ENCODE measurements at regions of chr1 and their contacts with region 1.

Region 1: GRCh38 chr1:157984469-157984868 is 9.0 kb upstream of the KIRREL1 start:
- H3K4me3 ChIP-seq: no peak overlapping the region
- H3K27ac ChIP-seq: no peak overlapping the region
- H3K4me1 ChIP-seq: no peaks in the 10 kb centered on the region
- CTCF ChIP-seq: no peak

Region 2: DNA sequence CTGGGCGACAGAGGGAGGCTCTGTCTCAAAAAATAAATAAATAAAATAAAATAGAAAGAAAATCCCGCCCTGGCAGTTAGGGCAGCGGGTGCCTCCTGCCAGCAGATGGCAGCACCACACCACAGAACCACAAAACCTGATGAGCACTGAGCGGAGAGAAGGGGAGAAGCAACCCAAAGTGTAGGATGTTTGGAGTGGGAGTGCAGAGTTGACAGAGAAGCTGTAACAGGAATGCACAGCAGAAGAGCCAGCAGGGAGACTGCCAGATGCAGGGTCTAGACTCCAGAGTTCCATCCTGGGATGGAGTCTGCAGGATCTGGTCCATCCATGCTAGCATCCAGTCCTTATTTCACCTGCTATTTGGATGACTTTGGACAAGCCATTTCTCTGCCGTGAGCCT is 20.8 kb before region 1 on chr1:
- CTCF ChIA-PET with region 1: interaction called, 71 read pairs
- POLR2A ChIA-PET with region 1: no interaction called
- H3K4me3 ChIP-seq: no peak overlapping the region
- H3K27ac ChIP-seq: no peak overlapping the region
- H3K4me1 ChIP-seq: no peaks in the 10 kb centered on the region
- CTCF ChIP-seq: peak; percentile 84

Region 3: GRCh38 chr1:157969697-157970485 is 14.6 kb before region 1 on chr1:
- CTCF ChIA-PET with region 1: interaction called, 71 read pairs
- POLR2A ChIA-PET with region 1: no interaction called
- H3K4me3 ChIP-seq: no peak overlapping the region
- H3K27ac ChIP-seq: no peak overlapping the region
- H3K4me1 ChIP-seq: no peaks in the 10 kb centered on the region
- CTCF ChIP-seq: peak; percentile 61

Region 4: GRCh38 chr1:158095737-158096335 is 111.4 kb after region 1 on chr1:
- CTCF ChIA-PET with region 1: interaction called, 77 read pairs
- POLR2A ChIA-PET with region 1: no interaction called
- H3K4me3 ChIP-seq: no peak overlapping the region
- H3K27ac ChIP-seq: no peak overlapping the region
- H3K4me1 ChIP-seq: no peaks in the 10 kb centered on the region
- CTCF ChIP-seq: peak; percentile 38; the same call in 1 of the 2 replicates

Measured in HEK293 (cell line).